K562 (cell line): ENCODE measurements at regions of chr6 and their contacts with region 1.

Region 1: DNA sequence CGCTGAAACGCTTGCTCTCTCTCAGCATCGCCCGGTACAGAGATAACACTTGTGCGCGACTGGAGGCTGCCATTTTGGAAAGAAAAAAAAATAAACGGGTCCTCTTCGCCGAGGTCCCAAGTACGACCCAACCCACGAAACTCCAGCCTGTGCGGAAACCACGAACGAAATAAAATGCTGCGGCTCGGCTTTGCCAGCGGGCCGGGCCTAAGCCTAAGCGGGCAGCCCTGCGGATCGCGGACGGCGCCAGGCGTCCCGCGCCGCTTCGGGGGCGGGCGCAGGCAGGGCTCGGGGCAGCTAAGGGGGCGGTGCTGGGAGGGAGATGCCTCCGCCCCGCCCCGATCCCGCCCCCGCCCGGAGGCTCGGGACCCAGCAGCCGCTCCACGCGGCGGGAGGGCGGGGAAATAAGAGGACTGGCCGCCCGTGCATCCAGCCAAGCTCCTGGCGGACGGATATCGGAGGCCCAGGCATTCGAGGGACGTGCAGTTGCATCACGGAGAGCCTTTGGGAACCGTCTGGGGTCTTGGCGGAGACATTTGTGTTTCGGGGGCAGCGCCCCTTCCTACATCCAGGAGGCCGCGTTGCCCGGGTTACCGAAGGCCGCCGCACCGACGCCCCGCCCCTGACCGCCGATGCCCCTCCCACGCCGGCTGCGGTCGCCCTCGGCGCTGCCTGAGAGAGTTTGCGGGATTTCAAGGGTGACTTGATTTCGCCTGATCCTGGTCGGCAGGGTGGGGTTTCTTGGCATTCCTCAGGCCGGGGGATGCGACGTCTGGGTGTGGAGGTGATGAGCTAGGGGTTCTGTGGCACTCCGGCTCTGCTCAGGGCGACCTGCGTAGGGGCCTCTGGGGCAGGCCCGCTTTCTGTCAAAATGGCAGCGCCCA is at the starts of genes FARS2 and LYRM4:
- DNase-seq: peak; percentile 94 to 97 (median 96)
- ATAC-seq: peak; percentile 90
- H3K4me3 ChIP-seq: peak within 1 kb of the TSS; percentile 76
- H3K27ac ChIP-seq: peak within 1 kb of the TSS; percentile 98
- H3K4me1 ChIP-seq: peaks cover 6 to 7% of the 10 kb centered on the region in 2 experiments; a peak in 4 of 5 replicates
- H3K27me3 ChIP-seq: no peaks in the 10 kb centered on the region
- CTCF ChIP-seq: 0 out of 6 replicates have a peak, but pooled peaks of 1 of the 3 experiments have one; percentile 0
- EP300 ChIP-seq: peak; percentile 5; the same call in 1 of the 2 replicates
- POLR2A ChIP-seq: peak; percentile 71
- RAD21 ChIP-seq: no peak
- polyA plus RNA-seq, gene FARS2: 52.3 to 62.2 TPM
- polyA plus RNA-seq, gene LYRM4: 50.2 to 61.0 TPM

Region 2: DNA sequence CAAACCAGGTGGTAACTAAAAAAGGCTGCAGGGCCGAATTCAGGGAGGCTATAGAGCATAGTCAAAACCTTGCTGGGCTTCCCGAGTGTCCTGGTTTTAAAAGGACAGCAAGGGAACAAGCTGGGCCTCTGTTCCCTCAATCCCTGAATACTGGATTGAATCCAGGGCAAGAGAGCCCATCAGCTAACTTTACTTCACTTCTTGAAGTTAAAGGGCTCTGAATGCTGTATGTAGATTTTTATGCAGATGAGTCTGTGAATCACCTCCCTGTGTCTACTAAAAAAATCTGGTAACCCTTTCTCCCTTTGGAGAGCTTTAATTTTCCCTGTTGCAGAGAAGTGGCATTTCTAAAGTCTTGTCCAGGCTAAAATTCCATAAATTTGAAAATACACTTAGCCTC is 29.6 kb before region 1 on chr6:
- CTCF ChIA-PET with region 1: no interaction called
- POLR2A ChIA-PET with region 1: interaction called, 5 read pairs
- in situ Hi-C with region 1: no loop called
- intact Hi-C with region 1: loop called (anchors 2 kb)
- DNase-seq: peak in 1 of 4 experiments; percentile 33
- ATAC-seq: peak; percentile 36
- H3K4me3 ChIP-seq: no peak overlapping the region
- H3K27ac ChIP-seq: peak overlapping the region; percentile 35
- H3K4me1 ChIP-seq: peaks cover 0 to 16% of the 10 kb centered on the region in 2 experiments; a peak in 2 of 5 replicates
- H3K27me3 ChIP-seq: no peaks in the 10 kb centered on the region
- CTCF ChIP-seq: no peak
- EP300 ChIP-seq: no peak
- POLR2A ChIP-seq: no peak
- RAD21 ChIP-seq: no peak

Region 3: GRCh38 chr6:5302995-5303622 is 42.2 kb after region 1 on chr6:
- CTCF ChIA-PET with region 1: no interaction called
- POLR2A ChIA-PET with region 1: interaction called, 4 read pairs
- in situ Hi-C with region 1: no loop called
- intact Hi-C with region 1: loop called (anchors 5 kb)
- DNase-seq: peak in 2 of 4 experiments; percentile 30 to 48
- ATAC-seq: peak; percentile 77
- H3K4me3 ChIP-seq: no peak overlapping the region
- H3K27ac ChIP-seq: peak overlapping the region; percentile 49; the same call in 1 of the 3 replicates
- H3K4me1 ChIP-seq: peaks cover 22 to 39% of the 10 kb centered on the region in 2 experiments; a peak in 4 of 5 replicates
- H3K27me3 ChIP-seq: no peaks in the 10 kb centered on the region
- CTCF ChIP-seq: peak; percentile 50 to 53 (median 52); a peak in 4 of 6 replicates
- EP300 ChIP-seq: no peak
- POLR2A ChIP-seq: no peak
- RAD21 ChIP-seq: peak; percentile 34 to 57; a peak in 3 of 4 replicates